ENCODE measurements at regions of chr11 and their contacts with region 1.

Region 1: GRCh38 chr11:17972987-17973386 is 39.9 kb downstream of the SERGEF start:
- DNase-seq: peak; percentile 42
- ATAC-seq: peak; percentile 86

Region 2: GRCh38 chr11:17846852-17847453 is 126.0 kb before region 1 on chr11:
- intact Hi-C with region 1: loop called (anchors 2 kb)
- DNase-seq: no peak
- ATAC-seq: peak; percentile 76